Endothelial cell of umbilical vein (primary cell): ENCODE measurements at regions of chr10 and their contacts with region 1.

Region 1: DNA sequence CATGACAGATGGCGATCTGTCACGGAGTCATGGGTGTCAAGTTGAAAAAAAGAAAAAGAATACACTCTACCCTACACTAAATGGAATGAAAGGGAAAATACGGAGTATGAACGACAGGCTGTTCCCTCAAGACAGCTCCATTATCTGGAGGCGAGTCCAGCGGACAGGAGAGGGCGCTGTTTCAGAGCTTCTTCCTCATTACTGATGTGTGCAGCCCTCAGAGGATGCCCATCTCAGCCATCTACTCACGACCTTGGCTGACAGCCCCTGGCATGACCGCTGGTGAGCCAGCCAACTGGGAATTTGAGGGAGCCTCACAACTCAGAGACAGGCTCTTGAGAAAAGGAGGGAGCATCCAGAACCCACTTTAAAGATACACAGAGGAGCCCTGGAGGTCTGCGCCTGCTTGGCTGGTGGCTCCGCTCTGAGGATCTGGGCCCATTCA is 49.6 kb upstream of the SMNDC1 start:
- DNase-seq: peak; percentile 86
- H3K4me3 ChIP-seq: no peak overlapping the region
- H3K27ac ChIP-seq: peak overlapping the region; percentile 34
- H3K4me1 ChIP-seq: peaks cover 24% of the 10 kb centered on the region
- H3K27me3 ChIP-seq: no peaks in the 10 kb centered on the region
- CTCF ChIP-seq: peak; percentile 84 to 96
- POLR2A ChIP-seq: no peak

Region 2: DNA sequence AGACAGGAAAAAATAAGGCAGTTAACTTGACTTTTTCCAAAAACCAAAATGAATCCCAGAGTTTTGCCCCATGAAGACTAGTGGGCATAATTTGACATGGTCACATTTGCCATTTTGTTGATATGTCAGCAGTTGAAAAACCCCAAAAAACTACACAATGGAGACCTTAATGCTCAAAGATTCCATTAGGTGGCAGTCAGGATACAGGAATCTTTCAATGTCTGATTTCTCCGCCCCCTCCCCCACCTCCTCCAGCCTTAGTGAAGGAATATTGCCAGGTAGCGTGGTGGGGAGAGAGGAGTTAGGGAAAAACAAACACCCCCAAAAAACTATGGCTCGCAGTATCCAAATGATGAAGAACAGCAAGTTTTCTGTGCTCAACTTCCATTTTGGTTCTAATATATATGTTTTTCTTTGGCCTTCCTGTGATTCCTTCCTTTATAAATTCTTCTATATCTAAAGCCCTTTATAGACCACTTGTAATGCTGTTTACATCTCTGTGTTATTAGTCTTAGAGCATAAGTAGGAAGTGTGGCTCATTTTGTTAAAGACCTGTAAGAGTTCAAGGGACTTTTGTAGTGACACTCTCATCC is 42.9 kb before region 1 on chr10:
- CTCF ChIA-PET with region 1: interaction called, 29 read pairs
- POLR2A ChIA-PET with region 1: no interaction called
- dilution Hi-C with region 1: no loop called
- intact Hi-C with region 1: loop called (anchors 1 kb)
- DNase-seq: peak; percentile 65
- H3K4me3 ChIP-seq: peak overlapping the region in 1 of 3 experiments; percentile 33
- H3K27ac ChIP-seq: peak overlapping the region; percentile 72
- H3K4me1 ChIP-seq: peaks cover 47% of the 10 kb centered on the region
- H3K27me3 ChIP-seq: no peaks in the 10 kb centered on the region
- CTCF ChIP-seq: peak; percentile 54 to 55
- POLR2A ChIP-seq: no peak

Region 3: GRCh38 chr10:110368002-110368401 is 13.7 kb after region 1 on chr10:
- CTCF ChIA-PET with region 1: interaction called, 30 read pairs
- POLR2A ChIA-PET with region 1: no interaction called
- dilution Hi-C with region 1: no loop called
- intact Hi-C with region 1: no loop called
- DNase-seq: peak; percentile 86
- H3K4me3 ChIP-seq: no peak overlapping the region
- H3K27ac ChIP-seq: no peak overlapping the region
- H3K4me1 ChIP-seq: peaks cover 6% of the 10 kb centered on the region
- H3K27me3 ChIP-seq: no peaks in the 10 kb centered on the region
- CTCF ChIP-seq: peak in 1 of 2 donors; percentile 14
- POLR2A ChIP-seq: no peak

Region 4: GRCh38 chr10:110395725-110396651 is 41.6 kb after region 1 on chr10:
- CTCF ChIA-PET with region 1: interaction called, 62 read pairs
- POLR2A ChIA-PET with region 1: no interaction called
- dilution Hi-C with region 1: no loop called
- intact Hi-C with region 1: loop called (anchors 1 kb)
- DNase-seq: peak; percentile 99
- H3K4me3 ChIP-seq: no peak overlapping the region
- H3K27ac ChIP-seq: peak overlapping the region; percentile 91
- H3K4me1 ChIP-seq: peaks cover 58% of the 10 kb centered on the region
- H3K27me3 ChIP-seq: no peaks in the 10 kb centered on the region
- CTCF ChIP-seq: no peak
- POLR2A ChIP-seq: peak; percentile 24

Region 5: GRCh38 chr10:110460111-110460809 is 105.9 kb after region 1 on chr10:
- CTCF ChIA-PET with region 1: interaction called, 9 read pairs
- POLR2A ChIA-PET with region 1: no interaction called
- dilution Hi-C with region 1: no loop called
- intact Hi-C with region 1: loop called (anchors 2 kb)
- DNase-seq: peak; percentile 55
- H3K4me3 ChIP-seq: no peak overlapping the region
- H3K27ac ChIP-seq: peak overlapping the region; percentile 66
- H3K4me1 ChIP-seq: peaks cover 29% of the 10 kb centered on the region
- H3K27me3 ChIP-seq: no peaks in the 10 kb centered on the region
- CTCF ChIP-seq: no peak
- POLR2A ChIP-seq: no peak

Region 6: DNA sequence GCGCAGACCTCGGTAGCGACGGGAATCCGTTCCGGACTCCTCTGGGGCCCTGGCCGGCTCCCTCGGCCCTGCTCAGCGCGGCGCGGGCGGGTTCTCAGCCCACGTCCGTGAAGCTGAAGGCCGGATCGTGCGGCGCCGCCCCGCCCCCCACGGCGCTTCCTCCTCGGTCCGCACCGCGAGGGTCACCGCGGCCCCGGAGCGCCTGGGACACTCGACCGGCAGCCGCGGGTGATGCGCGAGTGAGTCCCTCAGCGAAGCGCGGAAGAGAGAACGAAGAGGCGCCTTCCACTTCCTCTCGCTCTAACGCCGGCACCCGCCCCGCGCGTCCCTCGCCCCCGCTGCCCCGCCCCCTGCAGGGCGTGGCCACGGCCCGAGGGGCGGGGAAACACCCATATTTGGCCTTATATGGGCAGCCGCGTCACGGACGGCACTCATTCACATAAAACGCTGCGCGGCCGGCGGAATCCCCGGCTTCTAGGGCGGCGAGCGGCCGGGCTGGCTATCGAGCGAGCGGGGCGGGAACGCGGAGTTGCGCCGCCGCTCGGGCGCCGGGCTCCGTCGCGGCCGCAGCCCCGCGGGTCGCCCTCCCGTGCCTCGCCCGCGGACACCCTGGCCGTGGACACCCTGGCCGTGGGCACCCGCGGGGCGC is 143.2 kb after region 1 on chr10 and contains the start of gene DUSP5:
- CTCF ChIA-PET with region 1: interaction called, 268 read pairs
- POLR2A ChIA-PET with region 1: interaction called, 7 read pairs
- dilution Hi-C with region 1: no loop called
- intact Hi-C with region 1: loop called (anchors 1 kb)
- DNase-seq: peak; percentile 96
- H3K4me3 ChIP-seq: peak within 1 kb of the TSS; percentile 58 to 81 (median 77)
- H3K27ac ChIP-seq: peak within 1 kb of the TSS; percentile 94
- H3K4me1 ChIP-seq: peaks cover 48% of the 10 kb centered on the region
- H3K27me3 ChIP-seq: no peaks in the 10 kb centered on the region
- CTCF ChIP-seq: no peak
- POLR2A ChIP-seq: peak; percentile 93
- total RNA-seq, gene DUSP5: 12.2 and 12.6 TPM in 2 replicates

Region 7: DNA sequence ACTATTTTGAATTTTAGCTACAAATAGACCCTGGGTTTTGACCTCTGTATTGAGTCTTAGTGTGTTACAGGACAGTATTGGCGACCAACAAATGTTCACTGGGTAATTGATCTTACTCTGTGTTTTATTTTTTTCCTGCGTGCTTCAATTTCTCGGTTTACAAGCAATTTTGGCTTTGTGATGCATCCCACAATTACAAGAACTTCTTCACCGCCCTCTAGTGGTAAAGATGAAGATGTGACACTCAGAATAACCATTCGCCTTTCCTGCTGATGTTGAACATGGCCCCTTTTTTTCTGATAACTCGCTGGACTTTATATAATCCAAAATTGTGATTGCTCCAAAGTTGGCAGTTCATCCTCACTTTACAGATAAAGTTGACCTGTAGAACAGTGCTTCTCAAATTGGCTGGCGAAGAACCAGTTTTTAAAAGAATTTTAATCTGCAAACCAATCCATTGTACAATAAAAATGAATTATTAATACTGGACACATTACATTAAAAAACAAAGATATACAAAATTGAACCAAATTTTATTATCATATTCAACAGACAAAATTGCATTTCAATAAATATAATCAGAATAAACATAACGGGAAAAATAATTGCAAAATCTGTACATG is 192.9 kb after region 1 on chr10:
- CTCF ChIA-PET with region 1: interaction called, 95 read pairs
- POLR2A ChIA-PET with region 1: no interaction called
- dilution Hi-C with region 1: no loop called
- intact Hi-C with region 1: loop called (anchors 1 kb)
- DNase-seq: peak; percentile 61
- H3K4me3 ChIP-seq: no peak overlapping the region
- H3K27ac ChIP-seq: no peak overlapping the region
- H3K4me1 ChIP-seq: peaks cover 13% of the 10 kb centered on the region
- H3K27me3 ChIP-seq: peaks cover 1 to 4% of the 10 kb centered on the region in 2 experiments
- CTCF ChIP-seq: peak; percentile 63 to 68
- POLR2A ChIP-seq: no peak